T-cell (primary cell): ENCODE measurements at regions of chr16 and their contacts with region 1.

Region 1: DNA sequence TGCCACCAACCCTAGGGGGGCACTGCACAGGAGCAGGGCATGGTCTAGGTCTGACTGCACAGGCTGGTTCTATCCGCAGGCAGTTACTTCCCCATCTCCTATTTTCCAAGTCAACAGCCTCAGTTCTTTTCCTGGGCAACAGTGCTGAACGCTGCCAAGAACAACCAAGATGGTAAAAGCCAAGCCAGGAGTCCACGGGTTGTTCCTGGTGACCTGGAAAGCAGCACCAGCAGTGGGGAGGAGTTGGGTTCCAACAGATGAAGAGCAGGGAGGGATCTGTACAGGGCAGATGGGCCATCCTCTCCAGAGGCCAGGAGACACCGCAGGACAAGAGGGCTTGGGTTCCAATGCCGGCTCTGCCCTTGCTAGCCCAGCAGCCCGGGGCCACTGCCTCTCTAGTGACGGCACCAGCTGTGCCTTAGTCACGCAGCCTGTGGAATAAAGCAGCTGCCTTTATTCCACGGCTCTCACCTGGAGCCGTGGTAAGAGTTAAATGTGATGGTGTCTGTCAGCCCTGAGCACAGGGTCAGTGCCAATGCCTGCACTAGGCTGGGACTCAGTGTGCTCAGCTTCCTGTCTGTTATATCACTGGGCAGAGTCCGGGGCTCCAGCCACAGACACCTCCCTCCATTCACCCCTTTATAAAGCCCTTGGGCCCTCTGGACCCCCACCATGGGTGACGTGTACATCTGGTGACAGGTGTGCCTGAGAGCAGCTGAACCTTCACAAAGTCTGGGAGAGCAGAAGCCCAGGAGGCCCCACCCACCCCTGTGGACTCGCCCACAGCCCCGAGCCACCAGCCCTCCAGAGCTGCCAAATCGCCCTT is 44.9 kb downstream of the MARF1 start:
- DNase-seq: no peak
- ATAC-seq: no peak
- H3K4me3 ChIP-seq: no peak overlapping the region
- H3K4me3 Mint-ChIP-seq: no peak overlapping the region
- H3K27ac ChIP-seq: no peak overlapping the region
- H3K27ac Mint-ChIP-seq: peak overlapping the region; percentile 80 to 83
- H3K4me1 ChIP-seq: no peaks in the 10 kb centered on the region
- H3K4me1 Mint-ChIP-seq: peaks cover 0 to 23% (median 20%) of the 10 kb centered on the region in 3 donors
- H3K27me3 ChIP-seq: no peaks in the 10 kb centered on the region
- H3K27me3 Mint-ChIP-seq: no peaks in the 10 kb centered on the region

Region 2: DNA sequence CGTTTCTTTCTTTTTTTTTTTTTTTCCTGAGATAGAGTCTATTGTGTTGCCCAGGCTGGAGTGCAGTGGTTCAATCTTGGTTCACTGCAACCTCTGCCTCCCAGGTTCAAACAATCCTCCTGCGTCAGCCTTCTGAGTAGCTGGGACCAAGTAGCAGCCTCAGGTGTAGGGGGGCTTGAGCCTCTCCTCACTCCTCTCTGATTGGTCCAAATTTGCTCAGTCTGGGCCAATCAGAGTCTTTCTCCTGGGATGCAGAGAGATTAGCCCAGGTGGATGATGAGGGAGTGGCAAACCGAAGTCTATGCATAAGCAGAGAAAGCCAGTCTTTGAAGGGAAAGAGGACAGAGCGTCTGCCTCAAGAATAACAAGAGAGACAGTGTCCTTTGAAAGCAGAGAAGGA is 64.6 kb before region 1 on chr16:
- CTCF ChIA-PET with region 1: no interaction called
- POLR2A ChIA-PET with region 1: no interaction called
- DNase-seq: no peak
- ATAC-seq: no peak
- H3K4me3 ChIP-seq: no peak overlapping the region
- H3K4me3 Mint-ChIP-seq: no peak overlapping the region
- H3K27ac ChIP-seq: no peak overlapping the region
- H3K27ac Mint-ChIP-seq: no peak overlapping the region
- H3K4me1 ChIP-seq: no peaks in the 10 kb centered on the region
- H3K4me1 Mint-ChIP-seq: no peaks in the 10 kb centered on the region
- H3K27me3 ChIP-seq: no peaks in the 10 kb centered on the region
- H3K27me3 Mint-ChIP-seq: peaks cover 0 to 7% of the 10 kb centered on the region in 2 donors

Region 3: GRCh38 chr16:15544405-15544804 is 53.6 kb before region 1 on chr16:
- CTCF ChIA-PET with region 1: interaction called in 1 of 2 experiments, 10 read pairs
- POLR2A ChIA-PET with region 1: no interaction called
- DNase-seq: no peak
- ATAC-seq: no peak
- H3K4me3 ChIP-seq: no peak overlapping the region
- H3K4me3 Mint-ChIP-seq: no peak overlapping the region
- H3K27ac ChIP-seq: no peak overlapping the region
- H3K27ac Mint-ChIP-seq: no peak overlapping the region
- H3K4me1 ChIP-seq: peaks cover 0 to 4% of the 10 kb centered on the region in 2 experiments
- H3K4me1 Mint-ChIP-seq: no peaks in the 10 kb centered on the region
- H3K27me3 ChIP-seq: peaks cover 0 to 3% of the 10 kb centered on the region in 2 experiments
- H3K27me3 Mint-ChIP-seq: no peaks in the 10 kb centered on the region

Region 4: DNA sequence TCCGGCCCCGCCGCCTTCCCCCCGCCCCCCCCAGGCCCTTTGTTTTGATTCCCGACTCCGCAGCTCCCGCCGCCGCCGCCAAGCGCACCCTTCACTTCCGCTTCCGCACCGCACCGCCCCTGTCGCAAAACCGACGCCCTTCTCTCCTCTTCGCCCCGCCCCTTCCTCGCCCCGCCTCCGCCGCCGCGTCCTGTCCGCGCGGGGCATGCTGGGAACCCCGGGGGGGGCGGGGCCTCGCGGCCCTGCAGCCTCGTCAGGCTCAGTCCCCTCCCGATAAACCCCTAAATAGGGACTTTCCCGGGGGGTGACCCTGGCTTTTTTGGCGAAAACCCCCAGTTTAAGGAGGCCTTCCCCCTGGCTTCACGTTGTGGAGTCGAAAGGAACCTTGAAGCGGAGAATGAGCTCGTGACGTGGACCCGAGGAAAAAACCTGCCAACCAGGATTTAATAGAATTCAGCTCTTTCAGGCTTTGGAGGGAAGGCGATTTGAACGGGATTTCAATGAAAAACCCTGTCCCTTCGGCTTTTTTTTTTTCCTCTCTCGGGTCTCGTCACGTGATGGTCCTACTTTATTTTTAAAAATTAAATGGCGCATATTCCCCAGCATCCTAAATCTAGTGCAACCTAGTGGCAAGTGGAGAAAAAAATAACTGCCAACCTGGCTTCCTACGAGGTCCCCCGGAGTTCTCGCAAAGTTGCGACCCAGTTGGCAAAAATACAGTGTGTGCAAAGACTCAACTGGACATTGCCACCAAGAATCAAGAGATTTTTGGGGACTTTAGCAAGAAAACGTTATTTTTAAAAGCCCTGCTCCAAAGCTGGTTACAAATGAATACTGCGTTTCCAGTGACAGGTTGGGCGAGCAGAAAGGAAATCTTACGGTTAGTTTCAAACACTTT is 45.3 kb after region 1 on chr16 and contains the start of gene MARF1:
- CTCF ChIA-PET with region 1: no interaction called
- POLR2A ChIA-PET with region 1: interaction called, 3 to 10 read pairs
- DNase-seq: peak; percentile 96 to 100 (median 99)
- ATAC-seq: peak; percentile 74 to 83 (median 80)
- H3K4me3 ChIP-seq: peak within 1 kb of the TSS; percentile 84 to 90
- H3K4me3 Mint-ChIP-seq: peak within 1 kb of the TSS; percentile 83 to 94 (median 91)
- H3K27ac ChIP-seq: peak within 1 kb of the TSS; percentile 100
- H3K27ac Mint-ChIP-seq: peak within 1 kb of the TSS; percentile 97 to 98
- H3K4me1 ChIP-seq: peaks cover 19 to 29% of the 10 kb centered on the region in 2 experiments
- H3K4me1 Mint-ChIP-seq: peaks cover 49 to 50% (median 49%) of the 10 kb centered on the region in 3 donors
- H3K27me3 ChIP-seq: no peaks in the 10 kb centered on the region
- H3K27me3 Mint-ChIP-seq: no peaks in the 10 kb centered on the region
- total RNA-seq, gene MARF1: 151 to 180 (median 177) TPM